ENCODE measurements at regions of chr19 and their contacts with region 1.

Region 1: GRCh38 chr19:19475849-19476828 is 39.2 kb downstream of the TSSK6 start:
- DNase-seq: no peak
- ATAC-seq: peak; percentile 23 to 42

Region 2: DNA sequence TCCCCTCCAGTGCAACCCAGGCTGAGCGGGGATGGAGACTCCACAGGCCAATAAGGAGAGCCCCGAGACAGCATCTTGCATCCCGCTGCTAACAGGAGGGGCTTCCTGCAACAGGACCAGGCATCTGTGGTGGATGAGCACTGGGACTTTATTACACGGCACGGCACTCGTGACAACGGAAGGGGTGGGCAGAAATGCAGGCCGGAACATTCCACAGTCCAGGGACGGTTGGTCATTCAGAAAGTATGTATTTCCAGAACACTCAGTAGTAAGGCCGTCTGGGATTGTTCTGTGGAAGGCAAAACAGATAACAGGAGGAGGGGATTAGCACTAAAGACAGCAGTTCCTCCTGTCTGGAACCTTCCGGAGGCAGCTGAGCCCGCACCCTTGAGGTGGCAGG is 199.8 kb before region 1 on chr19:
- intact Hi-C with region 1: no loop called
- DNase-seq: no peak
- ATAC-seq: no peak

Region 3: DNA sequence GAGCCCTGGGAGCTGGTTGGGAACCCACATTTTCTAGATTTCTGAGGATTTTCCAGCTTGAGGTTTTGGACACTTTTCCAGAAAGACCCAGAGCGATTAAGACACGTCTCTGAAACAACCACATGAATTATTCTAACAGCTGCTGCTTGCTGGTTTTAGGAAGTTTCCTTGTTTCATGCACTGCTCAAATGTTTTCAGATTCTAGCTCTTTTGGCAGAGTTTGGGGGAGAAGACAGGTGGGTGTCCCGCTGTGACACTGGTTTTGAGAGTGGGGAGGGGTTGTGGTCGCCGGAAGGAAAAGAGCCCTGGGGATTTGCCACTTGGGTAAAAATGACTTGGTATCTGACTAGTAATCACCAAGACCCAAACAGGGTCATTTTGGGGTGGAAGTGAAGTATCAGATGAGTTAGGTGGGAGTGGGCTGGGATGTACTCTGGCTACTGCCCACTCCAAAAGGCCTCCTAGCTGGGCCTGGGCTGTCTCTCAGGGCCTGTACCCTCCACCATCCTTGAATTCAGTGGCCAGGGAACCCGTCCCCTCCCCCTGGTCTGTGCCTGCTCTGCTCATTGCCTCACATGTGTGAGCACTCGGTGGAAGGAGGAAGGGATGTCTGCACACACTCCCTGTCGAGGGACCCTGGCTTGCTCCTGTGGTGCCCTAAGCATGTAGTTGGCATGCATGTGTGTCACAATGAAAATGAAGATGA is 57.4 kb before region 1 on chr19:
- intact Hi-C with region 1: loop called in 1 of 2 experiments (anchors 5 kb)
- DNase-seq: no peak
- ATAC-seq: peak in 1 of 2 donors; percentile 9

Measured in left cardiac atrium (tissue), 4 donors.